Tibial artery (tissue), 4 donors: ENCODE measurements at regions of chr7 and their contacts with region 1.

Region 1: DNA sequence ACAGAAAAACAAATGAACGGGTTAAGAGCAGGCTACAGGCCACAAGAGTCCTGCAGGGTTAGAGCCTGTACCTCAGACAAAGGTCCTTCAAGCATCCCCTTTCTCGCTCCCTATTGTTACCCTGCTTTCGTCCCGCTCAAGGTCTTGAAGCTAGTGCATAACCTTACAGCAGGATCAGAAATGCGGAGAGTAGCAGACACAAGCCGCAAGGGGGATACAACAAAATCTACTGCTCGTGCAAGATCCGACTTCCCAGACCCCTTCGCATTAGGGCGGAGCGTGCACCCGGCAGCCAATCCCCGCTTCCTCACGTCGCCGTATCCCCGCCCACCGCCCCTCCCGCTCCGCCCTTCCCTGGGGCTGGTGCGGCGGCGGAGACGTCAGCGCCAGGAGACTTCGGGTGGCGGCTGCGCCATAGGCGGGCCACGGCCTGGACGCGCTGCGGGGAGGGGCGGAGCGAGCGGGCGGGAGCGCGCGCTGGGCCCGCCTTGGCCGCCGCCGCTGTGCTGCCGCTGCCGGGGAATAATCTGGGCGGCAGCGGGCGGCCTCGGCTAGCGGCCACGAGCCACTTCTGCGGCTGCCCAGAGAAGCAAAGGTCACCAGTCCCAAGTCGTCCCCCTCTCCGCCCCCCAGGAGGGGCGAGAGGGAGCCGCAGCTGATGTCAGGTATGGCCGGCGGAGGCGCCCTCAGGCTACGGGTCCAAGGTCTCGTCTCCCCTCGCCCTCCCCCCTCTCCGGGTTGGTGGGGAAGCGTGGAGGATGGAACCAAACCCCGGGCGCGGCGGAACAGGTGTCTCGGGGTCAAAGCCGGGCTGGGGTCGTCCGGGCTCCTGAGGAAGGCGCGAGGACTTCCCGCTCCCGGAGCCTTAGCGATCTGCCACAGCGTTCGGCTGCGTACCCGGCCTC is at the start of gene C1GALT1:
- DNase-seq: peak; percentile 96 to 98
- H3K4me3 ChIP-seq: peak within 1 kb of the TSS; percentile 93
- H3K27ac ChIP-seq: peak within 1 kb of the TSS; percentile 96 to 97
- H3K4me1 ChIP-seq: peaks cover 0 to 17% (median 4%) of the 10 kb centered on the region in 4 donors
- H3K27me3 ChIP-seq: no peaks in the 10 kb centered on the region
- CTCF ChIP-seq: peak; percentile 37 to 57

Region 2: GRCh38 chr7:5314864-5315263 is 1867.5 kb before region 1 on chr7:
- intact Hi-C with region 1: no loop called
- DNase-seq: no peak
- H3K4me3 ChIP-seq: no peak overlapping the region
- H3K27ac ChIP-seq: no peak overlapping the region
- H3K4me1 ChIP-seq: no peaks in the 10 kb centered on the region
- H3K27me3 ChIP-seq: no peaks in the 10 kb centered on the region
- CTCF ChIP-seq: no peak

Region 3: DNA sequence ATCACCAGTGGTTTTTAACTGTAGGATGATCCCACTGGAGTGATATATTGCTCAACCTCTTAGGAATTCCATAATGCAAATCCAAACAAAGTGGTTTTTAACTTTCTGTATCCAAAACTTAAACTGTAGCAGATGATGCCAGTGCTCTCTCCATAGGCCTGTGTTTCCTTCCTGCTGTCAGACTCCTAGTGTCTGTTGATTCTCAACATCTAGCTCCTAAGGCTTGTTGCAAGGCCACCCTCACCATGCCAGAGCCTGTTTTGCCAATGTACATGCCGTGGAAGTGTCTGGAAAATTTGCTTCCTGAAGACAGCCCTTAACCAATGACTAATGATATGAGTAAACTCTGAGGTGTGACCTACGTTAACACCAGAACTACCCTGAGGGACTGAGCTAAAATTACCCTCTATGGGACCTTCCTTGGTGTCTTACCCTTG is 39.2 kb after region 1 on chr7:
- intact Hi-C with region 1: no loop called
- DNase-seq: no peak
- H3K4me3 ChIP-seq: no peak overlapping the region
- H3K27ac ChIP-seq: no peak overlapping the region
- H3K4me1 ChIP-seq: peaks cover 0 to 45% (median 8%) of the 10 kb centered on the region in 4 donors
- H3K27me3 ChIP-seq: no peaks in the 10 kb centered on the region
- CTCF ChIP-seq: no peak

Region 4: GRCh38 chr7:7237201-7237977 is 55.0 kb after region 1 on chr7:
- intact Hi-C with region 1: no loop called
- DNase-seq: no peak
- H3K4me3 ChIP-seq: no peak overlapping the region
- H3K27ac ChIP-seq: no peak overlapping the region
- H3K4me1 ChIP-seq: no peaks in the 10 kb centered on the region
- H3K27me3 ChIP-seq: no peaks in the 10 kb centered on the region
- CTCF ChIP-seq: no peak

Region 5: GRCh38 chr7:7565761-7566650 is 383.6 kb after region 1 on chr7:
- intact Hi-C with region 1: loop called (anchors 1 kb)
- DNase-seq: no peak
- H3K4me3 ChIP-seq: peak overlapping the region; percentile 74 to 84
- H3K27ac ChIP-seq: peak overlapping the region; percentile 88 to 94
- H3K4me1 ChIP-seq: peaks cover 0 to 26% (median 18%) of the 10 kb centered on the region in 4 donors
- H3K27me3 ChIP-seq: no peaks in the 10 kb centered on the region
- CTCF ChIP-seq: no peak

Region 6: DNA sequence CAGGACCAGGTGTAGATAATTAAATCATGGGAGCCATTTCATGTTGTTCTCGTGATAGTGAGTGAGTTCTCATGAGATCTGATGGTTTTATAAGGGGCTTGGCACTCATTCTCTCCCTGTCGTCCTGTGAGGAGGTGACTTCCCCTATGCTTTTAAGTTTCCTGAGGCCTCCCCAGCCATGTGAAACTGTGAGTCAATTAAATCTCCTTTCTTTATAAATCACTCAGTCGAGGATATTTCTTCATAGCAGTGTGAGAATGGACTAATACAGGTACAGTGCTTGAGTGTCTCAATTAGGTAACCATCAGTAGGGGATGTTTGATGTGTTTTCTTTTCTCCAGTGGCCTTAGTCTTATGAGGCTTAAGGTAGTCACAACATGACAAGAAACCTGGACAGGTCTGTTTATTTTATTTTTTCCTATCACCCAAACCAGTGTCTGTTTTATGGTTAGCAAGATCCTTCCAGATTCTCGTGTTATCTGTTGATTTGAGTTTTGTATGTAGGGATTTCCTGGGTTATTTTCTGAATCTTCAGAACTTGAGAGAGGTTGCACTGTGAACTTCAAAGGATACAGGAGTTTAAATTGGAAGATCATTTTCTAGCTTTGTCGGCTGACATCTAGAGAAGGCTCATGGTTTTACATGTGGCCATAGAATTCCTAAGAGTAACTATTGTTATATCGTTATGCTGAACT is 490.3 kb after region 1 on chr7:
- intact Hi-C with region 1: no loop called
- DNase-seq: no peak
- H3K4me3 ChIP-seq: no peak overlapping the region
- H3K27ac ChIP-seq: no peak overlapping the region
- H3K4me1 ChIP-seq: peaks cover 0 to 28% (median 4%) of the 10 kb centered on the region in 4 donors
- H3K27me3 ChIP-seq: no peaks in the 10 kb centered on the region
- CTCF ChIP-seq: no peak